ENCODE measurements at regions of chr10 and their contacts with region 1.

Region 1: DNA sequence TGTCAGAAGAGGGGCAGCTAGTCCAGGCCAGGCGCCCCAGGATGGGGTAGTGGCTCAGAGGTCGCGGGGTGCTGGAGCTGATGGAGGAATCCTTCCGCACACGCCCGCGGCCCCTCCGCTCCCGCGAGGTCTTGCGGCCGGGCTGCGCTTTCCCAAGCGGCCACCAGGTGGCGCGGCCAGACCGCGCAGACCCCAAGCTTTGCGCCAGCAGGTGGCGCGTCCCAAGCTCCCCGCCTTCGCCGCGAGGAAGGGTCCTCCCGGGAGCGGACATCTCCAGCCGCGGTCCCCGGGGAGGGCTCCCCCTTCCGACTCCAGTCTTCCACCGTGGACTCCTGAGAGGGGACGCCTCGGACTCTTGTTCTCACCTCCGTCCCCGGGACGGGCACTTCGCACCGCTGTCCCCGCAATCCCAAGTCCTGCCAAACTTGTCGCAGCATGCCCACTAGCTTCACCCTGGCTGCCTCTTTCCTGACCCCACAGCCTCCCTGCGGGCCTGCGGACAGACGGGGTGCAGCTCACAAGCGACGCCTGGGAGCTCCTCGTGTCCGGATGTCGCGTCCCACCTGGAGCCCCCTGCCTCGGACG is 19.4 kb downstream of the KCNK18 start:
- DNase-seq: peak; percentile 72
- ATAC-seq: peak; percentile 91
- H3K4me3 Mint-ChIP-seq: peak overlapping the region; percentile 70
- H3K27ac Mint-ChIP-seq: no peak overlapping the region
- H3K4me1 Mint-ChIP-seq: peaks cover 7% of the 10 kb centered on the region
- H3K27me3 Mint-ChIP-seq: peaks cover 30% of the 10 kb centered on the region
- CTCF ChIP-seq: peak; percentile 99

Region 2: GRCh38 chr10:117137031-117137910 is 79.4 kb before region 1 on chr10:
- CTCF ChIA-PET with region 1: no interaction called
- POLR2A ChIA-PET with region 1: no interaction called
- intact Hi-C with region 1: no loop called
- DNase-seq: peak; percentile 14
- ATAC-seq: peak; percentile 17
- H3K4me3 Mint-ChIP-seq: no peak overlapping the region
- H3K27ac Mint-ChIP-seq: no peak overlapping the region
- H3K4me1 Mint-ChIP-seq: peaks cover 16% of the 10 kb centered on the region
- H3K27me3 Mint-ChIP-seq: peaks cover 66% of the 10 kb centered on the region
- CTCF ChIP-seq: no peak

Region 3: DNA sequence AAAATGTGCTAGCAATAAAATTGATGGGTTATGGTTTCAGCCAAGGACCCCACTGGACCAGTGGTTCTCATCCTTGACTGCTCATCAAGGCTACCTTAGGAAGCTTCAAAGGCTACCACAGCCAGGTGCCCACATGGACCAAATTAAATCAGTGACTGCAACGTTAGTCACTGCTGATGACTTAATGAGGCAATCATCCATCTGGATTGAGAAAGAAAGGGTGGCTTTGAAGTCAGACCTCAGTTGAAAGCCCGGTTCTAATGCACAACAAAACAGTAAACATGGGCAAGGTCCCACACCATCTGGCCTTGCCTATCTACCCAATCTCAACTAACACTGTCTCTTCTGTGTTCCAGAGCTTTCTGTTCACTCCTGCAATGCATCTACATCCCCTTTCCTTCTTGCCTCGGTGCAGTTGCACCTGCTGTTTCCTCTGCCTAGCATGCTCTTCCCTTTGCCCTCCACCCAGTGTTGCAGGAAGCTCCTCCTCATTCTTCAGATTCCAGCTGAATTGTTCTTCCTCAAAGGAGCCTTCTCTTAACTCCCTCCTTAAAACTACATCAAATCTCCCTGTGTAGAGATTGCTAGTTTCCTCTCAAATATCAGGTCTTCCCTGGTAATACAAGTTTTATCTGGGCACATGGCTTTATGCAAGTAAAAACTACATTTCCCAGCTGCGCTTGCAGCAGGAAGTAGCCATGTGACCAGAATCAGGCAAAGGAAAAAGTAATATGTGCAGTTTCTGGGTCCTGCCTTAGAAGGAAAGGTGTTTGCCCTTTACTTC is 29.7 kb before region 1 on chr10:
- CTCF ChIA-PET with region 1: interaction called, 11 read pairs
- POLR2A ChIA-PET with region 1: no interaction called
- intact Hi-C with region 1: no loop called
- DNase-seq: no peak
- ATAC-seq: peak; percentile 13
- H3K4me3 Mint-ChIP-seq: no peak overlapping the region
- H3K27ac Mint-ChIP-seq: no peak overlapping the region
- H3K4me1 Mint-ChIP-seq: no peaks in the 10 kb centered on the region
- H3K27me3 Mint-ChIP-seq: peaks cover 5% of the 10 kb centered on the region
- CTCF ChIP-seq: no peak

Region 4: DNA sequence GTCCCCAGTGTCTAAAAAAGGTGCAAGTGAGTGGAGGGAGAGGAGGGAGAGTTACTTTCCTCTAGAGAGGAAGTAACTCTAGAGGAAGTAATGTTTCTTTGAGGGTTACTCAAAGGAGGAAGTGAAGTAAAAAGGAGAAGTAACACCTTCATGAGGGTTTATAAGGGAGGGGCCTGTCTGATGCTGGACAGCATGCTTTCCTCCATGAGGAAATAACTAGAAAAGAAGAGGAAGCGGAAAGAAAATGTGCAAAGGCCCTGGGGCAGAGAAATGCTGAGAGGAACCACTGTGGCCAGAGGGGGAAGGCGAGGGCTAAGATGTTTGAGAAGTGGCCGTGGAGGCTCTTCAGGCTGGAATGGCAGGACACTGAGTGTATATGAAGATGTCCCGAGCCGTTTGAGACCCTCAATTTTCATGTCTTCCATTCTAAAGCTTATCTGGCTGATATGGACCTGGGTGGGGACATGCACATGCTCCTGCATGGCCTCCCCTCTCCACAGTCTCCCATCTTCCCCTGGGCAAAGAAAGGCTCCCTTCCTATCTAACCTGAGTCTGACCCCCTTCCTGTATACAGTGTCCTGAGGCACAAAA is 20.8 kb after region 1 on chr10:
- CTCF ChIA-PET with region 1: interaction called, 25 read pairs
- POLR2A ChIA-PET with region 1: interaction called, 3 read pairs
- intact Hi-C with region 1: no loop called
- DNase-seq: no peak
- ATAC-seq: no peak
- H3K4me3 Mint-ChIP-seq: no peak overlapping the region
- H3K27ac Mint-ChIP-seq: no peak overlapping the region
- H3K4me1 Mint-ChIP-seq: peaks cover 3% of the 10 kb centered on the region
- H3K27me3 Mint-ChIP-seq: peaks cover 20% of the 10 kb centered on the region
- CTCF ChIP-seq: no peak

Region 5: DNA sequence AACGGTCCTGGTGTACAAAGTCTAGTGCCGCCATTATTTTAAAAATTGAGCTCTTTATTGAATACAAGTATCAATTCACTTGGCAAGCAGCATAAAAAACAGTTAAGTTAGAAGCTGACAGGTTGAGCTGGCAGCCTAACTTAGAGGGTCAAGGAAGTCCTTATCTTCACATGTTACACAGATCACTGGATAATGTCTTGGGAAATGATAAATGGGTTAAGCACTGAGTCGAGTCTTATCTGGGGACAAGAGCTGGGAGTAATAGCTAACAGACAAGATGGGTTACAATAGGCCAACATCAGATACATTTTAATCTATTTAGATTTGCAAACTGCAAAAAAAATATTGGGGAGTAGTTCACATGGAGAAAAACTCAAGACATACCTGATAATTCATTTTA is 58.4 kb after region 1 on chr10:
- CTCF ChIA-PET with region 1: interaction called, 14 read pairs
- POLR2A ChIA-PET with region 1: no interaction called
- intact Hi-C with region 1: loop called (anchors 5 kb)
- DNase-seq: no peak
- ATAC-seq: no peak
- H3K4me3 Mint-ChIP-seq: no peak overlapping the region
- H3K27ac Mint-ChIP-seq: no peak overlapping the region
- H3K4me1 Mint-ChIP-seq: no peaks in the 10 kb centered on the region
- H3K27me3 Mint-ChIP-seq: no peaks in the 10 kb centered on the region
- CTCF ChIP-seq: no peak

Region 6: GRCh38 chr10:117320050-117320665 is 103.5 kb after region 1 on chr10:
- CTCF ChIA-PET with region 1: interaction called, 124 read pairs
- POLR2A ChIA-PET with region 1: no interaction called
- intact Hi-C with region 1: loop called (anchors 5 kb)
- DNase-seq: no peak
- ATAC-seq: peak; percentile 49
- H3K4me3 Mint-ChIP-seq: no peak overlapping the region
- H3K27ac Mint-ChIP-seq: no peak overlapping the region
- H3K4me1 Mint-ChIP-seq: peaks cover 2% of the 10 kb centered on the region
- H3K27me3 Mint-ChIP-seq: no peaks in the 10 kb centered on the region
- CTCF ChIP-seq: peak; percentile 68

Region 7: DNA sequence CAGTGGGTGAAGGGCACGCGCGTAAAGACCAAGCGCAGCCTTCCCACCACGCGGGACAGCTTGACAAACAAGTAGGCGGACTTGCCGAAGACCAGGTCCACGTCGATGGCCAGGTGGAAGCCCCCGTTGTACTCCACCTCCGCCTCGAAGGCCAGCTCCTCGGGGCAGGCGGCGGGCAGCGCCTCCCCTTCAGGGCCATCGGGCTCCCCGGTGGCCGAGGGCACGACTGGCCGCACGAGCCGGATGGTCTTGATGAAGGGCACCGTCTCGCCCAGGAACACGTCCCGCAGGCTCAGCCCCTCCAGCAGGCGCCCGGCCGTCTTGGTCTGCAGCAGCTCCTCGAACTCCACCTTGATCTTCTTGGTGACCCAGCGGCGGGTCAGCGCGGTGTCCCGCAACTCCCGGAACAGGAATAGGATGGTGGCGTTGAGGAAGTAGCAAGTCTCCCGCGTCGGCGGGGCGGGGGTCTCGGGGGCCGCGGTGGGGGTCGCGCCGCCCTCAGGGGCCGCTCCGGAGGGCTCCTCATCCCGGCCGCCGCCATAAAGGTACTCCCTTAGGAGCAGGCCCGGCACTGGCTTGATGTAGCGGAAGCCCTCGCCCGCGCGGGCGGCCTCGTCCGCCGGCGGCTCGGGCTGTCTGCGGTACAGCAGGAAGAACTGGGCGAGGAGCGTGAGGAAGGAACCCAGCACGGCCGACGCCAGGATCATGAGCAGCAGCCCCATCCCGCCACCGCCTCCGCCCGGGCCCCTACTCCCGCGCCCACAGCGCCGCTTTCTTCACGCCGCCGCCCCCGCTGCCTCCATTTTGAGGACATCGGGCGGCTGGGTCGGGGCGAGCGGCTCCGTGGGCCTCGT is 158.0 kb after region 1 on chr10:
- CTCF ChIA-PET with region 1: interaction called, 12 read pairs
- POLR2A ChIA-PET with region 1: no interaction called
- intact Hi-C with region 1: no loop called
- DNase-seq: peak; percentile 41
- ATAC-seq: peak; percentile 46
- H3K4me3 Mint-ChIP-seq: peak overlapping the region; percentile 89
- H3K27ac Mint-ChIP-seq: peak overlapping the region; percentile 82
- H3K4me1 Mint-ChIP-seq: peaks cover 31% of the 10 kb centered on the region
- H3K27me3 Mint-ChIP-seq: peaks cover 17% of the 10 kb centered on the region
- CTCF ChIP-seq: no peak